Right ventricle myocardium inferior (tissue), 1 donor: ENCODE measurements at regions of chr20 and their contacts with region 1.

Region 1: GRCh38 chr20:49219089-49219923 is at the start of gene DDX27:
- DNase-seq: peak; percentile 97
- ATAC-seq: peak; percentile 97
- total RNA-seq, gene DDX27: 15.8 TPM

Region 2: GRCh38 chr20:49132995-49133478 is 86.3 kb before region 1 on chr20:
- intact Hi-C with region 1: loop called (anchors 1 kb)
- DNase-seq: no peak
- ATAC-seq: peak; percentile 39

Region 3: GRCh38 chr20:49187330-49188168 is 31.8 kb before region 1 on chr20:
- intact Hi-C with region 1: loop called (anchors 2 kb)
- DNase-seq: no peak
- ATAC-seq: no peak